Activated B cell treated with CpG ODN at 0.5 μM for 24 hours (primary cell): ENCODE measurements at regions of chr12 and their contacts with region 1.

Region 1: DNA sequence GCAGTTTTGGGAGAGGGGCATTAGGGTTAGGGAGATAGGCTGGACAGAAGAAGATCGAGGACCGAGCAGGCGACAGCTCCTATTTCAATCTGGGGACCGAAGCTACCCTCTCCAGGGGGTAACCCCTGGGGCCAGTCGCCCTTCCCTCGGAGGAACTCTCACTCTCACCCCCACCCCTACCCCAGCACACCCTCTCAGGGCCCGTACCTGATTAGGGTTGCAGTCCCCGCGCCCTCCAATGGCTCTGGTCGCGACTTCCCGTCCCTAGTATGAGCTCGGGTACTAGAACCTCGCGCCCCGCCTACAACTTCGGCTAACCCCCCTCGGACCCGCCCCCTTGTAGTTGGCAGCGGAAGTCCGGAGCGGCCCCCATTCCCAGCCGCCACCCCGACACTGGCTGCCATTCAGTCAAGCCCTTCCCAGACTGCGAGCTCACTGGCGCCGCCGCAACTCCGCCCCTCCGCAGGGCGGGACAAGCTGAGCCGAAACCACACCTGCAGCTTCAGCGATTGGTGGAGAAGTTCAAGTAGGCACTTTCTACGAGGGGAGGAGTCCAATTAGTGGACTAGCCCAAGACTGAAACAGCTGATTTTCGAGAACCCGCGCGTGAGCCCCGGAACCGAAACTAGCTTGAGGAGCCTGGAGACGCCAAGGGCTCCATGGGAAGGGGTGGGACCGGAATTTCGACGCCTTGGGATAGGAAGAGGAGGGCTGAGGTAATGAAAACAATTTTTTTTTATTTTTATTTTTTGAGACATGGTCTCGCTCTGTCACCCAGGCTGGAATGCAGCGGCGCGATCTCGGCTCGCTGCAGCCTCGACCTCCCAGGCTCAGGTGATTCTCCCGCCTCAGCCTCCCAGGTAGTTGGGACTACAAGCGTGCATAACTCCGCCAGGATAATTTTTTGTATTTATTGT is at the start of gene STAT2:
- DNase-seq: peak; percentile 98
- ATAC-seq: peak; percentile 94
- H3K4me3 Mint-ChIP-seq: peak within 1 kb of the TSS; percentile 92
- H3K27ac Mint-ChIP-seq: peak within 1 kb of the TSS; percentile 94
- H3K4me1 Mint-ChIP-seq: peaks cover 36% of the 10 kb centered on the region
- H3K27me3 Mint-ChIP-seq: no peaks in the 10 kb centered on the region
- CTCF ChIP-seq: no peak
- total RNA-seq, gene STAT2: 159 and 177 TPM in 2 replicates

Region 2: DNA sequence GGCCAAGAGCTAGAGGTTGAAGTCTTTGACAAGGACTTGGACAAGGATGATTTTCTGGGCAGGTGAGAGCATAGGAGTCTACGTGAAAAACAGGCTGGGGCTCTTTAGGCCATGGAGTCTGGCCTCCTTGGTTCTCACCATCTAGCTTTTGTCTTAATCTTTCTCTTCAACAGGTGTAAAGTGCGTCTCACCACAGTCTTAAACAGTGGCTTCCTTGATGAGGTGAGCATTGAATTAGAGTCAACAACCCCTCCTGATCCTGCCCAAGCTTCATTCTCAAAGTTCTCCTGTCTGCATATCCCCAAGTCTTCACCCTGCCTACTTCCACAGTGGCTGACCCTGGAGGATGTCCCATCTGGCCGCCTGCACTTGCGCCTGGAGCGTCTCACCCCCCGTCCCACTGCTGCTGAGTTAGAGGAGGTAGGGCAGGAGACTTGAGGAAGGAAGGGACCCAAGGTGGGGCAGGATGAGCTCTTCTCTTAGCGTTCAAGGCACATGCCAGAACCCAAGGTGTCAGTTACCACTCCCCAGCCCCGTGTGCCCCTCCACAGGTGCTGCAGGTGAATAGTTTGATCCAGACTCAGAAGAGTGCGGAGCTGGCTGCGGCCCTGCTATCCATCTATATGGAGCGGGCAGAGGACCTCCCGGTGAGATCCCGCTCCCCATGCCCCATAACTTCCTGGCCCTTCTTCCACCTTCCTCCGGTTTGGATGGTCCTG is 222.1 kb before region 1 on chr12:
- CTCF ChIA-PET with region 1: no interaction called
- POLR2A ChIA-PET with region 1: no interaction called
- intact Hi-C with region 1: no loop called
- DNase-seq: no peak
- ATAC-seq: no peak
- H3K4me3 Mint-ChIP-seq: no peak overlapping the region
- H3K27ac Mint-ChIP-seq: no peak overlapping the region
- H3K4me1 Mint-ChIP-seq: peaks cover 4% of the 10 kb centered on the region
- H3K27me3 Mint-ChIP-seq: no peaks in the 10 kb centered on the region
- CTCF ChIP-seq: no peak

Region 3: GRCh38 chr12:56152318-56153033 is 207.6 kb before region 1 on chr12 and contains the start of gene MYL6B:
- CTCF ChIA-PET with region 1: no interaction called
- POLR2A ChIA-PET with region 1: interaction called, 6 read pairs
- intact Hi-C with region 1: loop called (anchors 1 kb)
- DNase-seq: peak; percentile 87
- ATAC-seq: peak; percentile 89
- H3K4me3 Mint-ChIP-seq: peak within 1 kb of the TSS; percentile 93
- H3K27ac Mint-ChIP-seq: peak within 1 kb of the TSS; percentile 99
- H3K4me1 Mint-ChIP-seq: peaks cover 40% of the 10 kb centered on the region
- H3K27me3 Mint-ChIP-seq: no peaks in the 10 kb centered on the region
- CTCF ChIP-seq: no peak
- total RNA-seq, gene MYL6B: 25.2 and 36.2 TPM in 2 replicates

Region 4: DNA sequence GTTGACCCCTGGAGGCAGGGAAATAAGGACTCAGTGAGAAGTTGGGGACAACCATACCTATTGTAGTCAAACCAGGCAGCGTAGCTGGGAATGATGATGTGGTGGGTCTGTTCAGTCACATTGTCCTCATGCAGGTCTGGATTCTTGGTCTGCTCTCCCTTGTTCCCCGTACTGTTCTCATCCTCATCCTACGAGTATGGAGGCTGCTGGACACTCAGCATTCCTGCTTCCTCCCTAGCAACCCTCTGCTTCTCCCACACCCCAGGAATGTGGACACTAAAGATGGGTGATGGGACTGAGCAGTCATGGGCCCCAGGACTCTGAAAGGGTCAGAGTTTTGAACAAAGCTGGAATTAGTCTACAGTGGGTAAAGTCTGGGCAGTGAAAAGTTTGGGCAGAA is 181.8 kb before region 1 on chr12:
- CTCF ChIA-PET with region 1: no interaction called
- POLR2A ChIA-PET with region 1: no interaction called
- intact Hi-C with region 1: no loop called
- DNase-seq: no peak
- ATAC-seq: no peak
- H3K4me3 Mint-ChIP-seq: no peak overlapping the region
- H3K27ac Mint-ChIP-seq: no peak overlapping the region
- H3K4me1 Mint-ChIP-seq: no peaks in the 10 kb centered on the region
- H3K27me3 Mint-ChIP-seq: no peaks in the 10 kb centered on the region
- CTCF ChIP-seq: no peak

Region 5: GRCh38 chr12:56299853-56300643 is 60.1 kb before region 1 on chr12 and contains the start of gene CS:
- CTCF ChIA-PET with region 1: no interaction called
- POLR2A ChIA-PET with region 1: interaction called, 18 read pairs
- intact Hi-C with region 1: loop called (anchors 1 kb)
- DNase-seq: peak; percentile 97
- ATAC-seq: peak; percentile 96
- H3K4me3 Mint-ChIP-seq: peak within 1 kb of the TSS; percentile 96
- H3K27ac Mint-ChIP-seq: peak within 1 kb of the TSS; percentile 97
- H3K4me1 Mint-ChIP-seq: peaks cover 59% of the 10 kb centered on the region
- H3K27me3 Mint-ChIP-seq: no peaks in the 10 kb centered on the region
- CTCF ChIP-seq: no peak
- total RNA-seq, gene CS: 229 and 233 TPM in 2 replicates

Region 6: GRCh38 chr12:56333679-56334489 is 26.2 kb before region 1 on chr12 and contains the start of gene PAN2:
- CTCF ChIA-PET with region 1: interaction called, 6 read pairs
- POLR2A ChIA-PET with region 1: interaction called, 76 read pairs
- intact Hi-C with region 1: loop called (anchors 1 kb)
- DNase-seq: peak; percentile 85
- ATAC-seq: peak; percentile 91
- H3K4me3 Mint-ChIP-seq: peak within 1 kb of the TSS; percentile 96
- H3K27ac Mint-ChIP-seq: peak within 1 kb of the TSS; percentile 100
- H3K4me1 Mint-ChIP-seq: peaks cover 46% of the 10 kb centered on the region
- H3K27me3 Mint-ChIP-seq: no peaks in the 10 kb centered on the region
- CTCF ChIP-seq: no peak
- total RNA-seq, gene PAN2: 86.3 and 98.9 TPM in 2 replicates

Region 7: GRCh38 chr12:56377310-56377988 is 17.3 kb after region 1 on chr12:
- CTCF ChIA-PET with region 1: interaction called, 6 read pairs
- POLR2A ChIA-PET with region 1: interaction called, 128 read pairs
- intact Hi-C with region 1: loop called (anchors 1 kb)
- DNase-seq: no peak
- ATAC-seq: no peak
- H3K4me3 Mint-ChIP-seq: no peak overlapping the region
- H3K27ac Mint-ChIP-seq: peak overlapping the region; percentile 94
- H3K4me1 Mint-ChIP-seq: peaks cover 53% of the 10 kb centered on the region
- H3K27me3 Mint-ChIP-seq: no peaks in the 10 kb centered on the region
- CTCF ChIP-seq: no peak

Region 8: GRCh38 chr12:56461235-56462159 is 101.4 kb after region 1 on chr12:
- CTCF ChIA-PET with region 1: interaction called, 35 read pairs
- POLR2A ChIA-PET with region 1: interaction called, 47 read pairs
- intact Hi-C with region 1: loop called (anchors 1 kb)
- DNase-seq: no peak
- ATAC-seq: no peak
- H3K4me3 Mint-ChIP-seq: no peak overlapping the region
- H3K27ac Mint-ChIP-seq: peak overlapping the region; percentile 14
- H3K4me1 Mint-ChIP-seq: peaks cover 22% of the 10 kb centered on the region
- H3K27me3 Mint-ChIP-seq: no peaks in the 10 kb centered on the region
- CTCF ChIP-seq: no peak

Region 9: GRCh38 chr12:56521590-56522371 is 161.7 kb after region 1 on chr12 and contains the start of gene RBMS2:
- CTCF ChIA-PET with region 1: no interaction called
- POLR2A ChIA-PET with region 1: interaction called, 10 read pairs
- intact Hi-C with region 1: no loop called
- DNase-seq: no peak
- ATAC-seq: peak; percentile 84
- H3K4me3 Mint-ChIP-seq: peak within 1 kb of the TSS; percentile 83
- H3K27ac Mint-ChIP-seq: peak within 1 kb of the TSS; percentile 72
- H3K4me1 Mint-ChIP-seq: peaks cover 22% of the 10 kb centered on the region
- H3K27me3 Mint-ChIP-seq: peaks cover 3% of the 10 kb centered on the region
- CTCF ChIP-seq: no peak
- total RNA-seq, gene RBMS2: 2.7 and 3.4 TPM in 2 replicates